Naive thymus-derived CD4-positive, alpha-beta T cell (primary cell): ENCODE measurements at regions of chr15 and their contacts with region 1.

Region 1: GRCh38 chr15:45179221-45179985 is 8.4 kb downstream of the SHF start:
- DNase-seq: peak in 6 of 9 donors; percentile 41 to 57 (median 50)
- ATAC-seq: no peak
- H3K4me3 ChIP-seq: no peak overlapping the region
- H3K4me3 Mint-ChIP-seq: no peak overlapping the region
- H3K27ac ChIP-seq: no peak overlapping the region
- H3K27ac Mint-ChIP-seq: peak overlapping the region in 1 of 9 donors; percentile 69
- H3K4me1 ChIP-seq: peaks cover 0 to 8% of the 10 kb centered on the region in 2 donors
- H3K4me1 Mint-ChIP-seq: peaks cover 0 to 18% (median 10%) of the 10 kb centered on the region in 7 donors
- H3K27me3 ChIP-seq: no peaks in the 10 kb centered on the region
- H3K27me3 Mint-ChIP-seq: no peaks in the 10 kb centered on the region

Region 2: DNA sequence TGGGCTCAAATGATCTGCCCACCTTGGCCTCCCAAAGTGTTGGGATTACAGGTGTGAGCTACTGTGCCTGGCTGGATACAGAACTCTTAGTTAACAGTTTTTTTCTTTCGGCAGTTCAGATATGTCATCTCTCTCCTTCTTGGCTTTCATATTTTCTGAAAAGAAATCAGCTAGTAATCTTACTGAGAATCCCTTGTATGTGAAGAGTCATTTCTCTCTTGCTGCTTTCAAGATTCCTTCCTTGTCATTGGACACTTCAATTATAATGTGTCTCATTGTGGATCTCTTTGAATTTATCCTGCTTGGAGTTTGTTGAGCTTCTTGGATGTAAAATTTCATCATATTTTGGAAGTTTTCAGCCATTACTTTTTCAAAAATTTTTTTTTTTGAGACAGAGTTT is 426.1 kb before region 1 on chr15:
- CTCF ChIA-PET with region 1: no interaction called
- POLR2A ChIA-PET with region 1: no interaction called
- intact Hi-C with region 1: no loop called
- DNase-seq: no peak
- ATAC-seq: no peak
- H3K4me3 ChIP-seq: no peak overlapping the region
- H3K4me3 Mint-ChIP-seq: no peak overlapping the region
- H3K27ac ChIP-seq: no peak overlapping the region
- H3K27ac Mint-ChIP-seq: no peak overlapping the region
- H3K4me1 ChIP-seq: no peaks in the 10 kb centered on the region
- H3K4me1 Mint-ChIP-seq: peaks cover 0 to 4% (median 0%) of the 10 kb centered on the region in 7 donors
- H3K27me3 ChIP-seq: no peaks in the 10 kb centered on the region
- H3K27me3 Mint-ChIP-seq: no peaks in the 10 kb centered on the region

Region 3: GRCh38 chr15:45161666-45162065 is 17.7 kb before region 1 on chr15:
- CTCF ChIA-PET with region 1: interaction called, 15 read pairs
- POLR2A ChIA-PET with region 1: interaction called, 11 read pairs
- intact Hi-C with region 1: no loop called
- DNase-seq: no peak
- ATAC-seq: no peak
- H3K4me3 ChIP-seq: no peak overlapping the region
- H3K4me3 Mint-ChIP-seq: no peak overlapping the region
- H3K27ac ChIP-seq: no peak overlapping the region
- H3K27ac Mint-ChIP-seq: peak overlapping the region in 1 of 9 donors; percentile 7
- H3K4me1 ChIP-seq: peaks cover 10 to 13% of the 10 kb centered on the region in 2 donors
- H3K4me1 Mint-ChIP-seq: peaks cover 11 to 32% (median 25%) of the 10 kb centered on the region in 7 donors
- H3K27me3 ChIP-seq: no peaks in the 10 kb centered on the region
- H3K27me3 Mint-ChIP-seq: no peaks in the 10 kb centered on the region

Region 4: DNA sequence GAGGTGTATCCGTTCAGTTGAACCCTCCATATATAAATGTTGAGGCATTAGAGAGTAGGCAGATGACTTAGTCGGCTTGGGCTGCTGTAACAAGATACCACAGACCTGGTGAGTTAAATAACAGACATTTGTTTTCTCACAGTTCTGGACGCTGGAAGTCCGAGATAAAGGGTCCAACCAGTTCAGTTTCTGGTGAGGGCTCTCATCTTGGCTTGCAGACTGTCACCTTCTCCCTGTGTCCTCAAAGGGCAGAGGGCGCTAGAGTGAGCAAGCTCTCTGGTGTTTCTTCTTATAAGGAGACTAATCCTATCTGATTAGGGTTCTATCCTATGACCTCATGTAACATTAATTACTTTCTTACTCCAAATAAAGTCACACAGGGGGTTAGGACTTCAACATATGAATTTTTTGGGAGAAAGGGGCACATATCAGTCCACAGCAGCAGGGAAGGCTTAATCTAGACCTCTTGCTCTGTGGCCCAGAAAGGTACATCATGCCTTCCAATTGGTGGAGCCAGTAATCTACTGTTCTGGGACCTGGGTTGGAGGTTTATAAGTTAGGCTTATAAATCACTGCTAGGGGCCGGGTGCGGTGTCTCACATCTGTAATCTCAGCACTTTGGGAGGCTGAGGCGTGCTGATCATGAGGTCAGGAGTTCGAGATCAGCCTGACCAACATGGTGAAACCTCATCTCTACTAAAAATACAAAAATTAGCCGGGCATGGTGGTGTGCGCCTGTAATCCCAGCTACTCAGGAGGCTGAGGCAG is 46.3 kb after region 1 on chr15:
- CTCF ChIA-PET with region 1: no interaction called
- POLR2A ChIA-PET with region 1: no interaction called
- intact Hi-C with region 1: loop called in 1 of 2 experiments (anchors 1 kb)
- DNase-seq: no peak
- ATAC-seq: no peak
- H3K4me3 ChIP-seq: no peak overlapping the region
- H3K4me3 Mint-ChIP-seq: no peak overlapping the region
- H3K27ac ChIP-seq: no peak overlapping the region
- H3K27ac Mint-ChIP-seq: no peak overlapping the region
- H3K4me1 ChIP-seq: no peaks in the 10 kb centered on the region
- H3K4me1 Mint-ChIP-seq: no peaks in the 10 kb centered on the region
- H3K27me3 ChIP-seq: no peaks in the 10 kb centered on the region
- H3K27me3 Mint-ChIP-seq: peaks cover 15 to 39% (median 33%) of the 10 kb centered on the region in 5 donors